ENCODE measurements at regions of chr3 and their contacts with region 1.

Region 1: DNA sequence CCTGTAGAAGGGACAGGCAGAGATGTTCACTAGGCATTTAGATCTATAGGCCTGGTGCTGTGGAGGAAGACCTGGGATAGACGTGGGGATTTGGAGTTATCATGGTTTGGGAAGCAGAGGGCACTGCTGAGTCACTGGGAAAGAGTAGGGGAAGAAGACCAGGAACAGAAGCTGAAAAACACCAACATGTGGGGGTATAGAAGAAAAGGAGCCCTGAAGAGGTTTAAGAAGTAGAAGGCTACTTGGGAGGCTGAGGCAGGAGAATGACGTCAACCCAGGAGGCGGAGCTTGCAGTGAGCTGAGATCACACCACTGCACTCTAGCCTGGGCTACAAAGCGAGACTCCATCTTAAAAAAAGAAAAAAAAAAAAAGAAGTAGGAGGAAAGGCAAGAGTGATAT is 19.2 kb downstream of the GRK7 start:
- DNase-seq: no peak
- H3K4me3 ChIP-seq: no peak overlapping the region
- H3K27ac ChIP-seq: no peak overlapping the region
- H3K4me1 ChIP-seq: no peaks in the 10 kb centered on the region
- H3K27me3 ChIP-seq: no peaks in the 10 kb centered on the region
- CTCF ChIP-seq: peak; percentile 40

Region 2: GRCh38 chr3:141905129-141905528 is 122.7 kb after region 1 on chr3:
- intact Hi-C with region 1: loop called (anchors 10 kb)
- DNase-seq: no peak
- H3K4me3 ChIP-seq: no peak overlapping the region
- H3K27ac ChIP-seq: no peak overlapping the region
- H3K4me1 ChIP-seq: no peaks in the 10 kb centered on the region
- H3K27me3 ChIP-seq: no peaks in the 10 kb centered on the region
- CTCF ChIP-seq: no peak

Region 3: DNA sequence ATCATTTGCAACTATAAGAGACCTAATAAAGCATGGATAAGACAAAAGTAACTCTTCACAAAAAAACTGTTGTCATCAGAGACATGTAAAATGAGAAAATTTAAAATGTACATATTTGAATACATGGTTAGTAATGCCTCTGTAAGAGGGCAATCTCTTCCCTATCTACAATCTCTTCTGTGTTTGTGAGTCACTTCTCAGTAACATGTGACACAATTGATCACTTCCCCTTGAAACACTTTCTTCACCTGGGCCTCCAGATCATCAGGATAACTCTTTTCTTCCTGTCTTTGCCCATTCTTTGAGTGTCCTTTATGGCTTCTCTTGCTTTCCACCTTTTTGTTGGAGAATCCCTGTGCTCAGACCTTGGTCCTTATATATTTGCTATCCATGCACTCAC is 316.5 kb after region 1 on chr3:
- intact Hi-C with region 1: no loop called
- DNase-seq: no peak
- H3K4me3 ChIP-seq: no peak overlapping the region
- H3K27ac ChIP-seq: no peak overlapping the region
- H3K4me1 ChIP-seq: no peaks in the 10 kb centered on the region
- H3K27me3 ChIP-seq: no peaks in the 10 kb centered on the region
- CTCF ChIP-seq: no peak